Vagina (tissue), 2 donors: ENCODE measurements at regions of chr17 and their contacts with region 1.

Region 1: GRCh38 chr17:46046957-46047356 is 47.9 kb downstream of the STH start:
- DNase-seq: no peak
- H3K4me3 ChIP-seq: no peak overlapping the region
- H3K27ac ChIP-seq: peak overlapping the region; percentile 55
- H3K4me1 ChIP-seq: peaks cover 22% of the 10 kb centered on the region
- H3K27me3 ChIP-seq: no peaks in the 10 kb centered on the region
- CTCF ChIP-seq: no peak
- POLR2A ChIP-seq: no peak

Region 2: GRCh38 chr17:46193626-46194392 is 146.9 kb after region 1 on chr17:
- intact Hi-C with region 1: loop called (anchors 5 kb)
- DNase-seq: peak in 1 of 2 donors; percentile 97
- H3K4me3 ChIP-seq: peak overlapping the region; percentile 72 to 98
- H3K27ac ChIP-seq: peak overlapping the region; percentile 100
- H3K4me1 ChIP-seq: peaks cover 43% of the 10 kb centered on the region
- H3K27me3 ChIP-seq: no peaks in the 10 kb centered on the region
- CTCF ChIP-seq: peak in 2 of 3 experiments; percentile 17 to 27
- POLR2A ChIP-seq: peak in 1 of 2 donors; percentile 54